ENCODE measurements at regions of chr5 and their contacts with region 1.

Region 1: GRCh38 chr5:154405078-154405792 is 40.6 kb upstream of the SAP30L start:
- DNase-seq: peak; percentile 62 to 94
- H3K4me3 ChIP-seq: no peak overlapping the region
- CTCF ChIP-seq: peak in 1 of 3 donors; percentile 77
- POLR2A ChIP-seq: no peak

Region 2: DNA sequence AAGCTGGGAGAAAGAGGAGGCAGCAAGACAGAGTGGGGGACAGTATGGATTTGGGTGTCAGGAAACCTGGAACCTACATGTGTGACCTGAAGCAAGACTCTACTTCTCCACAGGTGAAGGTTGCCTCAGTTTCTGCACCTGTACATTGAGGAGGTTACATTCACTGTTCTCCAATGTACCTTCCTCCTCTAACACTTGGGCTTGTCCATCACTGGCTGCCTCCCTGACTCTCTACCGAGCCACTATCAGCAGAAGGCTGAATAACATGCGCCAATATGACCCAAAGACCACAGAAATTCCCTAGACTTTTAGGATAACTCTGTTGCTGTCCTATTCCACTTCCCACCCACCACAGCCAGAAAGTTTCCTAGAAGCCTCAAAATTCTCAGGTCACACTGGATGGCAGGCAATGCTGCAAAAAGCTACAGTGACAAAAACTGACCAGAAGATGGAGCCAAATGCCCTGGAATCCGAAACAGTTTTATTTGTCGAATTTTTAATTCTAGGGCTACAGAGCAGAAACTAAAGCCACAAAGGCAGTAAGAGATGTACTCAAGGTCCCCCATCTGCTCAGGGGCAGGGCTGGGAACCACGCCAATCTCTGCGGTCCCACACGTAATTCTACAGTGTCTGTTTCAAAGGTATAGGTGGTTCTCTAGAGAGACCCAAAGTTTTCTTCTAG is 431.0 kb before region 1 on chr5:
- intact Hi-C with region 1: loop called (anchors 10 kb)
- DNase-seq: no peak
- H3K4me3 ChIP-seq: no peak overlapping the region
- CTCF ChIP-seq: no peak
- POLR2A ChIP-seq: no peak

Region 3: GRCh38 chr5:154072414-154073171 is 332.6 kb before region 1 on chr5:
- intact Hi-C with region 1: loop called (anchors 5 kb)
- DNase-seq: peak; percentile 73 to 95
- H3K4me3 ChIP-seq: no peak overlapping the region
- CTCF ChIP-seq: peak in 1 of 3 donors; percentile 61
- POLR2A ChIP-seq: no peak

Region 4: DNA sequence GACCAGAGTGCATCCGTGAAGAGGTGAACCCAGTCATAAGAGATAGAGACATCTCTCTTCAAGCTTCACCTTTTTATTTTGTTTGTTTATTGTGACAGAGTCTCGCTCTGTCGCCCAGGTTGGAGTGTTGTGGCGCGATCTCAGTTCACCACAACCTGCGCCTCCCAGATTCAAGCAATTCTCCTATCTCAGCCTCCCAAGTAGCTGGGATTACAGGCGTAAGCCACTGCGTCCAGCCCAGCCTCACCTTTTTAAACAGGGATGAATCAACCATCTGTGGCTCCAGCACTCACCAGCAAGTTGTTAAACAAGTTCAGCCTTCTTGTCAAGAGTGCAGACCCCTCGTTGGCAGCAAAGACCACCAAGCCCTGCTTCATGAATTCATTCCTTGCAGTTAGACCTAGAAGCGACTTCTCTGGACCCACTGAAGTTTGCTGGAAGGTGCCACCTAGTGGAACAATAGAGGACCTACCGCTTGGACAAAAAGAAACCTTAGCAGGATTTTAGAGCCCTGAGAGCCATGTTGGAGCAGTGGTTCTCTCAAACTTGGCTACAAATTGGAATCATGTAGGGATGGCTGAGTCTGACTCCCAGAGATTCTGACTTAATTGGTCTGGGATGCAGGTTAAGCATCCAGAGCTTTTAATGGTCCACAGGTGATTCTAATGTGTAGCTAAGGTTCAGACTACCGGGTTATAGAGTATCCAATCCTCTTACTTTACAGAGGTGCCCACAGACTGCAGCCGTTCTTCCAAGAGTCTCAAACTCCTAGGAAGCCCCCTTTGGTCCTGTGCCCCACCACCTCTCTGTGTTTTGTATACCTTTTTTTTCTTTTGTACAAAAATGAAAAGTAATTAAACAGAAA is 225.2 kb before region 1 on chr5:
- intact Hi-C with region 1: loop called (anchors 5 kb)
- DNase-seq: no peak
- H3K4me3 ChIP-seq: no peak overlapping the region
- CTCF ChIP-seq: no peak
- POLR2A ChIP-seq: no peak

Region 5: GRCh38 chr5:154461531-154461930 is 56.3 kb after region 1 on chr5:
- intact Hi-C with region 1: no loop called
- DNase-seq: peak in 1 of 2 donors; percentile 60
- H3K4me3 ChIP-seq: no peak overlapping the region
- CTCF ChIP-seq: no peak
- POLR2A ChIP-seq: no peak

Region 6: DNA sequence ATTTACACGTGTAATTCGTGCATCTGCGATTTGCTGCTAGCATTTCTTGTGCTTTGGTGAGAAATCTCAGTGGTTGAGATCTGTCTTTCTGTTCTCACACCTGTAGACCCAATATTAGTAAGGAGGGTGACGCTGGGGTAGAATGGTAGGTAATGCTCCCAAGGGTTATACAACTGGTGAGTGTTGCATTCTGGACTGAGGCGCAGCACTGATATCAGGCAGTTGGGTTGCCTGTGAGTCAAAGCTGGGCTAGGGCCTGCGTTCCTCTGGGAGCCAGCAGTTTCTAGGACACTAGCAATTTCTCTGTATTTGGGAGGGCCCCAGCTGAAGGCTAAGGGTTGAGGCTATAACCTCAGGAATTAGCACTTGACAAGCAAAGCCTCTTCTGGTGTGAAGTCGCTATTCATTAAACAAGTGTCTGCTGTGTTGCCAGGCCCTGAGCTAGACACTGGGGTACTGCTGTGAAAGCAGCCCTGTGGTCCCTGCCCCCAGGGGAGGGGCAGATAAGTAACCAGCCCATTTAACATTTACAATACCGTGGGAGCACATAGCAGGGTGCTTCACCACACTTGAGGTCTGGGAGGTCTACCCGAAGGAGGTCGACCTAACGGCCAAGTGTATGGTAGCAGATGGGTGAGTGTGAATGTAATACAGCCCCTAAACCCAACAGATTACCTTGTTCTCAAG is 378.7 kb after region 1 on chr5:
- intact Hi-C with region 1: no loop called
- DNase-seq: no peak
- H3K4me3 ChIP-seq: no peak overlapping the region
- CTCF ChIP-seq: no peak
- POLR2A ChIP-seq: no peak

Measured in lower leg skin (tissue), 4 donors.